ENCODE measurements at regions of chr2 and their contacts with region 1.

Region 1: DNA sequence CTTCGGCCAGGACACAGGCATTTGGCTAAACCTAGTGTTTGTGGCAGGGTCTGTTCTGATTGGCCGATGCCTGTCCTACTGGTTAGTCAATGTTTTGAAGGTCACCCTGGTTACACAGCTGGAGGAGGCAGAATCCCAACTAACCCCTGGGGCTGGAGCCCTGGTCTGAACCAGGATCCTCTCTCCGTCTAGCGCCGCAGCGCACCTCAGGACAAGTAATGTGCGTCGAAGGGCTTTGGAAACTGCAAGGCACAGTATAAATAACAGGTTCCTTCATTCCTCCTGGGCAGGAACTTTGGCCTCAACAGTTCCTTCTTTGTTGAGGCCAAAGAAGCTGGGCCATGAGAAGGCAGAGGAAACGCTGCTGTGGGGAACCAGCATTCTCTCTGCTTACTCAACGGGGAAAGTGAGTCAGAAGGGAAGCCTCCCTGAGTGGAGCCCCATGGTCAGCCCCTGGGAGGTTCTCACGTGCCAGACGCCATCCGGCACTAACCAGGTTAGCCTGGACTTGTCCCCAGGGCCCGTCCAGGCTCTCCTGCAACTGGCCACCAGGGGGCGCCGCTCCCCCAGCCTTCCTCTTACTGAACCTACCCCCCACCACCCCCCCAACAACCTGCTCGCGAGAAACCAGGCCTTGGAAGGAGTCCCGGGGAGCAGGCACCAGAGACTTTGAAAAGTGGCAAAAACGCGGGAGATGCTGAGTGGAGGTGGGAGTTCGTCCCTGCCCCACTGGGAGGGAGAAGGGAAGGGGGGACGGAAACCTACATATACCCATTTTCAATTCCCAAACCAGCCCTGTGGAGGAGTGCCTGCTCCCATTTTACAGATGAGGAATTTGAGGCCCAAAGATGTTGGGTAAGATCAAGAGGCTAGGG is 19.8 kb downstream of the TEX44 start:
- DNase-seq: peak in 1 of 2 donors; percentile 97
- H3K4me3 ChIP-seq: peak overlapping the region in 1 of 2 donors; percentile 53
- H3K27ac ChIP-seq: peak overlapping the region; percentile 92
- H3K4me1 ChIP-seq: peaks cover 40% of the 10 kb centered on the region
- H3K27me3 ChIP-seq: no peaks in the 10 kb centered on the region
- CTCF ChIP-seq: peak; percentile 91 to 95 (median 94)
- POLR2A ChIP-seq: no peak

Region 2: GRCh38 chr2:231642631-231643494 is 30.4 kb after region 1 on chr2:
- intact Hi-C with region 1: loop called (anchors 2 kb)
- DNase-seq: peak in 1 of 2 donors; percentile 97
- H3K4me3 ChIP-seq: peak overlapping the region; percentile 25 to 27
- H3K27ac ChIP-seq: peak overlapping the region; percentile 92
- H3K4me1 ChIP-seq: peaks cover 38% of the 10 kb centered on the region
- H3K27me3 ChIP-seq: no peaks in the 10 kb centered on the region
- CTCF ChIP-seq: no peak
- POLR2A ChIP-seq: peak in 1 of 2 donors; percentile 5

Region 3: GRCh38 chr2:231666171-231667095 is 54.0 kb after region 1 on chr2:
- intact Hi-C with region 1: loop called (anchors 2 kb)
- DNase-seq: peak in 1 of 2 donors; percentile 95
- H3K4me3 ChIP-seq: peak overlapping the region; percentile 44 to 65
- H3K27ac ChIP-seq: peak overlapping the region; percentile 98
- H3K4me1 ChIP-seq: peaks cover 44% of the 10 kb centered on the region
- H3K27me3 ChIP-seq: no peaks in the 10 kb centered on the region
- CTCF ChIP-seq: peak in 1 of 3 experiments; percentile 20
- POLR2A ChIP-seq: peak; percentile 14 to 74

Region 4: DNA sequence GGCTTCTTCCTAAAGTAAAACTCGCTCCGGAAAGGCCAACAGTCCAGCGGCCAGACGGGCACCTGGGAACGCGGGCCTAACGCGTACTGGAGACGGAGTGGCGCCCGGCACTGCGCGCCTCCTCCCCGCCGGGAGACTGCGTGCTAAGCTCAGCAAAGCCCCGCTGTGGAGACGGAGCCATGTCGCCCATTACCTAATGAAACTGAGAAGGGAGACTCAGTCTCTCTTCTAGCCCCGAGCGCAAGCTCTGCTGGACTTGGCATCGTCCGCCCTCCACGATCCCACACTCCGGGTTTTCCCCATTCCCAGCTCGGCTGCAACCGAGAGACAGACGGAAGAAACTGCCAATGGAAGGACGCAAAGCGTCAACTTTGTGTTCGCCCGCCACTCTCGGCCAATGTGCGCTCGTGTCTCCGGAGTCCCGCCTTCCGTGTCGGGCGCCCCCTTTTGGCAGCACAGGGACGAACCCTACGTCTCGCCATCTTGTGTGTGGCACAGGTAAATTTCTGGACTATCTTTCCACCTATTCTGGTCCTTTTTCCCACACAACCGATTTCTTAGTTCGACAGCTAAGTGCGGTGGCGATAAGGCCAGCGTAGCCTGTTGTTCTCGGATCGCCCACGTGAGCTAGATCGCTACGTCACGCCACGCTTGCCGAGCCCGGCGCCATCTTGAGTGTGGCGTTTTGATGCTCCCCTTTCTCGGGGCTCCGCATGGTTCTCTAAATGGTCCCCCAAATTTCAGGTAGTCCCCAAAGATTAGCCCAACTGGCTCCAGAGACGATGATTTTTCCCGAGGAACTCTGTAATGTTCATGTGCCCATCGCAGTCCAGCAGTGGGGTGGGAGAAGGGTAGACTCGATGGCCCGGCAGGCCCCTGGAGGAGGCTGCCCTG is 94.6 kb after region 1 on chr2:
- intact Hi-C with region 1: loop called (anchors 2 kb)
- DNase-seq: peak in 1 of 2 donors; percentile 99
- H3K4me3 ChIP-seq: peak overlapping the region; percentile 89 to 100
- H3K27ac ChIP-seq: peak overlapping the region; percentile 100
- H3K4me1 ChIP-seq: peaks cover 34% of the 10 kb centered on the region
- H3K27me3 ChIP-seq: no peaks in the 10 kb centered on the region
- CTCF ChIP-seq: peak; percentile 60 to 86 (median 70)
- POLR2A ChIP-seq: peak in 1 of 2 donors; percentile 94

Region 5: GRCh38 chr2:231713730-231714430 is 101.5 kb after region 1 on chr2:
- intact Hi-C with region 1: loop called (anchors 2 kb)
- DNase-seq: no peak
- H3K4me3 ChIP-seq: no peak overlapping the region
- H3K27ac ChIP-seq: peak overlapping the region; percentile 83
- H3K4me1 ChIP-seq: peaks cover 38% of the 10 kb centered on the region
- H3K27me3 ChIP-seq: no peaks in the 10 kb centered on the region
- CTCF ChIP-seq: peak; percentile 89 to 93 (median 90)
- POLR2A ChIP-seq: no peak

Region 6: DNA sequence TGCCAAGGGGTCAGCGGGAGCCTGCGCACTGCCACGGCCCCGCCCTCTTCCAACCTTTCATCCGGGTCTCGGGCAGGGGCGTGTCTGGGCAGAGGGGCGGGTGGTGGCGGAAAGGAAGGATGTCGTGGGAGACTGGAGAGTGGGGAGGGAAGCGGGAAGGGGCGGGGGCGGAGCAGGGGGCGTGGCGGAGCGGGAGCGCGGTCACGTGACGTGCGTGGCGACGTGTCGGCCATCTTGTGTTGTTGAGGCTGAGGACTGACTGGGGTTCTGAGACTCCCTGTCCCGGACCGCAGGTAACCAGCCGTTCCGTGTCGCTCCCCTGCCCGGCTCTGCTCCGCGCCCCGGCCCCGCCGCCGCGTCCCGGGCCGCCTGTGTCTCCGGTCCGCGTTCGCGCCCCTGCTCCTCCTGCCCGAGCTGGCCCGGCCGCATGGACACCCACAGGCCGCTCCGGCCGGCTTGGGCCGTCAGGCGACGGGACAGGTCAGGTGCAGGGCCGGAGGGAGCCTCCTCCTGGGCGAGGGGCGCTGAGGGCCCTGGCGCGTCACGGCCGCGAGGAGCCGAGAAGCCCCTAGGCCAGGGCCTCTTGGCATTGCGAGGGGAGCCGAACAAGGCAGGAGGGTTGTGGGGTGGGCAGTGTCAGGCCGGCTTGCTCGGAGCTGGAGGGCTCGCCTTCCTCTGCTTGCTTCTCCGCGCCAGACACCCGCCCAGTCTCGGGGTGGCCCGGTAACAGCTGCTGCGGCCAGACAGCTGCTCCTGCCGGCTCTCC is 1084.9 kb after region 1 on chr2 and contains the start of gene GIGYF2:
- intact Hi-C with region 1: loop called (anchors 5 kb)
- DNase-seq: peak in 1 of 2 donors; percentile 98
- H3K4me3 ChIP-seq: peak within 1 kb of the TSS; percentile 85 to 93
- H3K27ac ChIP-seq: peak within 1 kb of the TSS; percentile 97
- H3K4me1 ChIP-seq: peaks cover 42% of the 10 kb centered on the region
- H3K27me3 ChIP-seq: no peaks in the 10 kb centered on the region
- CTCF ChIP-seq: no peak
- POLR2A ChIP-seq: peak in 1 of 2 donors; percentile 45
- total RNA-seq, gene GIGYF2: 69.0 TPM

Measured in vagina (tissue), 2 donors.